Activated CD8-positive, alpha-beta T cell treated with anti-CD3 and anti-CD28 coated beads for 36 hours (primary cell): ENCODE measurements at regions of chr19 and their contacts with region 1.

Region 1: DNA sequence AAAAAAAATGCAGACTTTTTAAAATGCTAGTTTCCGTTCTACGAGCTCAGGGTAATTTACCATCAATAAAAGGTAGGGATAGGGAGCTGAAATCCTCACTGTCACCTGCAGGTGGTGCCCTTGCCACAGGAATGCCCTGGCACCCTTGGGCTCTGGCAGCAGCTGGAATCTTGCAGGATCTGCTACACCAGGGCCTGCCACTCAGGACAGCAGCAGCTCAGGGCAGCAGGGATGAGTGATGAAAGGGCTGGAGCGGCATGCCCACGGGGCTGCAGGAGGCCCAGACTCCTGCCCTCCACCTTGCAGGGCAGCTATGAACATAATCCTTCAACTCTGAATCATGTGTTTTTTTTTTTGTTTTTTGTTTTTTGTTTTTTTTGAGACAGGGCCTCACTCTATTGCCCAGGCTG is 54.0 kb downstream of the GNG7 start:
- DNase-seq: peak; percentile 83
- ATAC-seq: peak; percentile 87
- H3K4me3 Mint-ChIP-seq: no peak overlapping the region
- H3K27ac Mint-ChIP-seq: no peak overlapping the region
- H3K4me1 Mint-ChIP-seq: no peaks in the 10 kb centered on the region
- H3K27me3 Mint-ChIP-seq: no peaks in the 10 kb centered on the region
- CTCF ChIP-seq: peak; percentile 98

Region 2: GRCh38 chr19:2446271-2446779 is 202.2 kb before region 1 on chr19:
- CTCF ChIA-PET with region 1: no interaction called
- POLR2A ChIA-PET with region 1: no interaction called
- intact Hi-C with region 1: no loop called
- DNase-seq: peak; percentile 70
- ATAC-seq: peak; percentile 77
- H3K4me3 Mint-ChIP-seq: peak overlapping the region; percentile 52
- H3K27ac Mint-ChIP-seq: peak overlapping the region; percentile 35
- H3K4me1 Mint-ChIP-seq: peaks cover 26% of the 10 kb centered on the region
- H3K27me3 Mint-ChIP-seq: no peaks in the 10 kb centered on the region
- CTCF ChIP-seq: no peak

Region 3: GRCh38 chr19:2554856-2555255 is 93.7 kb before region 1 on chr19:
- CTCF ChIA-PET with region 1: no interaction called
- POLR2A ChIA-PET with region 1: no interaction called
- intact Hi-C with region 1: no loop called
- DNase-seq: no peak
- ATAC-seq: no peak
- H3K4me3 Mint-ChIP-seq: no peak overlapping the region
- H3K27ac Mint-ChIP-seq: no peak overlapping the region
- H3K4me1 Mint-ChIP-seq: peaks cover 34% of the 10 kb centered on the region
- H3K27me3 Mint-ChIP-seq: no peaks in the 10 kb centered on the region
- CTCF ChIP-seq: no peak

Region 4: GRCh38 chr19:2636897-2637683 is 11.4 kb before region 1 on chr19:
- CTCF ChIA-PET with region 1: interaction called, 32 read pairs
- POLR2A ChIA-PET with region 1: no interaction called
- intact Hi-C with region 1: no loop called
- DNase-seq: peak; percentile 83
- ATAC-seq: peak; percentile 97
- H3K4me3 Mint-ChIP-seq: no peak overlapping the region
- H3K27ac Mint-ChIP-seq: no peak overlapping the region
- H3K4me1 Mint-ChIP-seq: peaks cover 14% of the 10 kb centered on the region
- H3K27me3 Mint-ChIP-seq: peaks cover 3% of the 10 kb centered on the region
- CTCF ChIP-seq: peak; percentile 78

Region 5: GRCh38 chr19:2670262-2670661 is 21.7 kb after region 1 on chr19:
- CTCF ChIA-PET with region 1: interaction called, 11 read pairs
- POLR2A ChIA-PET with region 1: no interaction called
- intact Hi-C with region 1: no loop called
- DNase-seq: no peak
- ATAC-seq: no peak
- H3K4me3 Mint-ChIP-seq: no peak overlapping the region
- H3K27ac Mint-ChIP-seq: no peak overlapping the region
- H3K4me1 Mint-ChIP-seq: no peaks in the 10 kb centered on the region
- H3K27me3 Mint-ChIP-seq: no peaks in the 10 kb centered on the region
- CTCF ChIP-seq: no peak

Region 6: DNA sequence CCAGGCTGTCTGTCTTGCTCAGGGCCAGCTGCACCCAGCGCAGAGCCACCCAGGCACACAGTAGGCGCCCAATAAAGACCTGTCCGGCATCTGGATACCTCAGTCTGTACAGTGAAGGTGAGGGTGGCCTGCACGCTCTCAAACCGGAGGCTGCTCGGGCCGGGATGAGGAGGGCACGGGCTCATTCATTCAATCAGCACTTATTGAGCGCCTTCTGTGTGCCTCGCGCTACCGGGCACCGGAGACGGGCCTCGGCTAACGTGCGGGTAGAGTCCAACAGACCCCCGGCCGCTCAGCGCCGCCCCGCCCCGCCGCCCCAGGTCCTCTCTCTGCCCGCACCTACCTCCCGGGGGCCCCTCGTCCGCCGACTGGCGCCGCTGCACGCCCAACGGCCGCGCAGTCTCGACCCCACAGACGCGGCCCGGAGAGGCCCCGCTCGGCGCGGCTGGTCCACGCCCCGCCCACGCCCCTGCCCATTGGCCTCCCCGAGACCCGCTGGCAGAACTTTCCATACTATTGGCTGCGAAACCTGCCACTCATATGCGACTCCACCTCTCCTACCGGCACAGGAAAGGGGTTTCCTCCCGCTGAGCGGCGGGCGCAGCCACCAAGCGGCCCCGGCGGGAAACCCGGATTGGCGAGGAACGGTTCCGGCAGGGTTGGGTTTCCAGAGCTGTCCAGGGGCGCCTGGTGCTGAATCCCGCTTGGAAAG is 91.2 kb after region 1 on chr19 and contains the start of gene SLC39A3:
- CTCF ChIA-PET with region 1: interaction called, 19 read pairs
- POLR2A ChIA-PET with region 1: no interaction called
- intact Hi-C with region 1: no loop called
- DNase-seq: peak; percentile 99
- ATAC-seq: peak; percentile 100
- H3K4me3 Mint-ChIP-seq: peak within 1 kb of the TSS; percentile 98
- H3K27ac Mint-ChIP-seq: peak within 1 kb of the TSS; percentile 82
- H3K4me1 Mint-ChIP-seq: peaks cover 21% of the 10 kb centered on the region
- H3K27me3 Mint-ChIP-seq: peaks cover 5% of the 10 kb centered on the region
- CTCF ChIP-seq: no peak
- total RNA-seq, gene SLC39A3: 35.5 to 38.1 TPM

Region 7: GRCh38 chr19:2759362-2759761 is 110.8 kb after region 1 on chr19:
- CTCF ChIA-PET with region 1: interaction called, 10 read pairs
- POLR2A ChIA-PET with region 1: no interaction called
- intact Hi-C with region 1: no loop called
- DNase-seq: peak; percentile 23
- ATAC-seq: no peak
- H3K4me3 Mint-ChIP-seq: no peak overlapping the region
- H3K27ac Mint-ChIP-seq: no peak overlapping the region
- H3K4me1 Mint-ChIP-seq: no peaks in the 10 kb centered on the region
- H3K27me3 Mint-ChIP-seq: no peaks in the 10 kb centered on the region
- CTCF ChIP-seq: no peak